A549 (cell line): ENCODE measurements at regions of chr1 and their contacts with region 1.

Region 1: DNA sequence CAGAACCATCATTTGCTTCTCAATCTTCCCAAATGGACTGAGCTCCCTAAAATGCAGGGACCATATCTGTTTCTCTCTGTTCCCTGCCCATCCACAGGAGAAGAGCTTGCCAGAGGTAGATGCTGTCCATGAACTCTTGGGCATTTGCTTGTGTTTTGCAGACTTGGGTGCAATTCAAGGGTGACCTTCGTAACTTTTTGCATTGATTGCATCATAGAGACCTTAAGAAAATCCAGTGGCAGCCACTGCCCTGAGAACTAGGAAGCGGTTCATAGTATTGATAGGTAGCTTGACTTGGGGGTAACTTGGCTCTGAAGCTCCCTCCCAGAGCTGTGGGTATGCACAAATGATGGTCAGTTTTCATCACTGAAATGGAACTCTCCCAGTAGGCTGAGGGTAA is 34.3 kb upstream of the EDEM3 start:
- DNase-seq: no peak
- ATAC-seq: no peak
- H3K4me3 ChIP-seq: no peak overlapping the region
- H3K27ac ChIP-seq: peak overlapping the region in 1 of 2 experiments; percentile 58; a peak in 3 of 6 replicates
- H3K4me1 ChIP-seq: peaks cover 41% of the 10 kb centered on the region
- CTCF ChIP-seq: no peak
- EP300 ChIP-seq: no peak
- POLR2A ChIP-seq: no peak
- RAD21 ChIP-seq: no peak

Region 2: GRCh38 chr1:184878002-184878401 is 89.0 kb after region 1 on chr1:
- CTCF ChIA-PET with region 1: no interaction called
- POLR2A ChIA-PET with region 1: no interaction called
- DNase-seq: no peak
- ATAC-seq: no peak
- H3K4me3 ChIP-seq: no peak overlapping the region
- H3K27ac ChIP-seq: no peak overlapping the region
- H3K4me1 ChIP-seq: no peaks in the 10 kb centered on the region
- CTCF ChIP-seq: no peak
- EP300 ChIP-seq: no peak
- POLR2A ChIP-seq: no peak
- RAD21 ChIP-seq: no peak

Region 3: DNA sequence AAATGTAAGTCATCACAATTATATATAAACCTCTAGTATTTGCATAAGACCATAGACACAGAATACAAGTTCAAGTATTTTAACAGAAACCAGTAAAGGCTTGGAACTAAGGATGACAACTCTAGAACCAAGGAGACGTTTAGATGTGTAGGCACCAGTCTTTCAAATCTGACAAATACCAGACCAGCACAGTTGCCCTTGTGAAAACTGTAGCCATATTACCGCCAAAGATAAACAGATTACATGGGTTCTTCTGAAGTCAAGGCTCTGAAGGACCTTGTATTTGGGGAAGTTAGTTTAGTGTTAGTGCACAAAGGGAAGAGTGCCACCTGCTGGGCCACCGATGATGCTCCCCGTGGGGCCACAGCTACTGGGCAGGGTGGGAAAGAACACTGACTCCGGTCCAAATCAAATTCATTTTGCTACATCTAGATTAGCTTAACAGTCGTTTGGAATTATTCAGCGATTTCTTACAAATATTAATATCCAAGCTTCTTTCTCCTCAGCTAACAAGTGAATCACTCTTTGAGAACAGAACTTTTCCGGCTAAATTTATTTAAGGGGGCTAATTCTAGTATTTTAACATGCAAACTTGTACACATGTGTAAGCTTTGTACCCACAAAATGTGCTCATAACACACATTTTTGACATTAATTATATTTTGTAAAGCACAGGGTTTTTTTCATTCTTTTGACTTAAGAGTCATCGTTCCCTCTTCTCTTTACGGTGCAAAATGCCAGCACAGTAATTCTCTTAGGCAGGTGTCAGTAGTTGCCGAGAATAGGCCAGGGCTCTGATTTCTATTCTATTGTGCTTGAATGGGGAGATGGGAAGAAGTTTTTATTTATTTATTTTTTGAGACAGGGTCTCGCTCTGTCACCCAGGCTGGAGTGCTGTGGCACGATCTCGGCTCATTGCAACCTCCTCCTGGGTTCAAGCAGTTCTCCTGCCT is 193.3 kb after region 1 on chr1:
- CTCF ChIA-PET with region 1: interaction called, 17 read pairs
- POLR2A ChIA-PET with region 1: no interaction called
- DNase-seq: peak; percentile 32 to 71
- ATAC-seq: peak; percentile 98 to 99
- H3K4me3 ChIP-seq: no peak overlapping the region
- H3K27ac ChIP-seq: no peak overlapping the region
- H3K4me1 ChIP-seq: no peaks in the 10 kb centered on the region
- CTCF ChIP-seq: peak; percentile 89
- EP300 ChIP-seq: no peak
- POLR2A ChIP-seq: no peak
- RAD21 ChIP-seq: peak; percentile 84 to 86